Activated CD4-positive, alpha-beta T cell treated with anti-CD3 and anti-CD28 coated beads for 36 hours (primary cell): ENCODE measurements at regions of chr3 and their contacts with region 1.

Region 1: GRCh38 chr3:49856181-49857005 is at the start of gene TRAIP:
- DNase-seq: peak; percentile 97
- ATAC-seq: peak; percentile 99
- H3K4me3 Mint-ChIP-seq: peak within 1 kb of the TSS; percentile 97
- H3K27ac Mint-ChIP-seq: peak within 1 kb of the TSS; percentile 81
- H3K4me1 Mint-ChIP-seq: peaks cover 10% of the 10 kb centered on the region
- H3K27me3 Mint-ChIP-seq: no peaks in the 10 kb centered on the region
- total RNA-seq, gene TRAIP: 25.1 to 28.1 TPM

Region 2: GRCh38 chr3:49723628-49724551 is 132.5 kb before region 1 on chr3 and contains the start of gene GMPPB:
- CTCF ChIA-PET with region 1: no interaction called
- POLR2A ChIA-PET with region 1: no interaction called
- intact Hi-C with region 1: loop called in 1 of 2 experiments (anchors 1 kb)
- DNase-seq: peak; percentile 97
- ATAC-seq: peak; percentile 87
- H3K4me3 Mint-ChIP-seq: peak within 1 kb of the TSS; percentile 92
- H3K27ac Mint-ChIP-seq: peak within 1 kb of the TSS; percentile 96
- H3K4me1 Mint-ChIP-seq: peaks cover 22% of the 10 kb centered on the region
- H3K27me3 Mint-ChIP-seq: no peaks in the 10 kb centered on the region
- total RNA-seq, gene GMPPB: 21.0 to 32.1 TPM

Region 3: DNA sequence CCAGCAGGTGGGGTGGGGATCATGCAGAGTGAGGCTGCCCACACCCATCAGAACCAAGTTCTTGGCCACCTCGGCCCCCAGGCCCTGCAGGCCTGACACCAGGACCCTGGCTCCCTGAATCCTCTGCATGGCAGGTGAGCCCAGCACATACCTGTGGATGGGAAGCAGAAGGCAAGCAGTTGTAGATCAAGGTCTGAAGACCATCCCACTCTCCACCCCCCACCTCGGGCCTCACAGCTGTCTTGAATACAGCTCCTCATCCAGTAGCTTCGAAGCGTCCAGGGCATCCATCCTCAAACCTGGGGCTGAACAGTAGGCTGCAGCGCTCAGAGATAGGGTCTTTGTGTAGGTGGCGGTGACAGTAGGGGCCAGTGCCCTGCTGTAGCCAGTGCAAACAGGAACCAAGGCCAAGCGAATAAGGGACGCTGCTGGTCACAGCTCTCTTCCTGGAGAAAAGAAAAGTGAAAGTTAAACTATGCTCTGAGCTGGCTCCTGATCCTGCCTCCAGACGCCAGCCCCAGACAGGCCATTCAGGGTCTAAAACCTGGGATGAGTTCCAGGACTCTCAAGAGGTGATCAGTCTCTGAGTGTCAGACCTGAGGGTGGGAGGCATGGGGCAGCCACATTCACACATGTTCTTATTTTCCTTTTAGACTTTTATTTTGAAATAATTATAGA is 42.8 kb before region 1 on chr3 and contains the start of gene UBA7:
- CTCF ChIA-PET with region 1: no interaction called
- POLR2A ChIA-PET with region 1: no interaction called
- intact Hi-C with region 1: loop called in 1 of 2 experiments (anchors 1 kb)
- DNase-seq: peak; percentile 62
- ATAC-seq: peak; percentile 92
- H3K4me3 Mint-ChIP-seq: peak within 1 kb of the TSS; percentile 89
- H3K27ac Mint-ChIP-seq: peak within 1 kb of the TSS; percentile 95
- H3K4me1 Mint-ChIP-seq: peaks cover 14% of the 10 kb centered on the region
- H3K27me3 Mint-ChIP-seq: no peaks in the 10 kb centered on the region
- total RNA-seq, gene UBA7: 85.5 to 85.7 TPM

Region 4: GRCh38 chr3:49906004-49906743 is 49.8 kb after region 1 on chr3:
- CTCF ChIA-PET with region 1: no interaction called
- POLR2A ChIA-PET with region 1: no interaction called
- intact Hi-C with region 1: loop called (anchors 1 to 5 kb)
- DNase-seq: peak; percentile 77
- ATAC-seq: peak; percentile 45
- H3K4me3 Mint-ChIP-seq: peak overlapping the region; percentile 8
- H3K27ac Mint-ChIP-seq: peak overlapping the region; percentile 48
- H3K4me1 Mint-ChIP-seq: peaks cover 22% of the 10 kb centered on the region
- H3K27me3 Mint-ChIP-seq: no peaks in the 10 kb centered on the region

Region 5: DNA sequence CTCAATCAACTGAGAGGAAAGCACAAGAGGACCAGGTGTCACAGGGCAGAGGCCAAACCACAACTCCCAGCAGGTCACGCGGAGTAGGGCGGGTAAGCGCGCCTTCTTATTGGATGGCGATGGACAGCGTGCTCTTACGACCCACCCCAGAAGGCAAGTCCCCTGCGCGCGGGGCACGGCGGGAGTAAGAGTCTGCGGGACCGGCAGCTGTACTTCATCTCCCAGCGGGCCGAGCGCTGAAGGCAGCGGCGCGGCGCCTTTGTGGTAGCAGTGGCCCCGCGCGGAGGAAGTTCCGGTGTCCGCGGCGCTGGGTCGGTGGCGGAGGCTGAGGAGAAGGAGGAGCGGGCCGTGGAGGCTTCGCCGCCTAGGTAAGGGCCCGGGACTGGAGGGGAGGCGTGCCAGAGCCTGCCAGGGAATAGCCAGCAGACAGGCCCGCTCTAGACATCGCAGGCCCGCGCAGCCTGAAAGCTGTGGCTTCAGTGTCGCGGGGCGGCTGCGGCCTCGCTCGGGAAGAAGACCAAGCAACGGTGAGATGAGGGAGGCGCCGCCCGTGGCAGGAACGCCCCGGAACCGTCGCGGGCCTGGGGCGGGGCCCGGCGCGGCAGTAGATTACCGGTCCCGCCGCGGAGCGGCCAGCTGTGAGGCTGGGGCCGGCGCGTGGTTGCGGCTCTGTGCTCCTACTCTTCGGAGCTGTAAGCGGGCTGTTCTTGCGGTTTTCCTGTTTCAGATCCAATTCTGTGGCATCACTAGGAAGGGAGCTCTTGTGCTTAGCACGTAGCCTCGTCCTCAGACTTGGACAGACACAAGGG is 83.7 kb after region 1 on chr3 and contains the start of gene RBM6:
- CTCF ChIA-PET with region 1: no interaction called
- POLR2A ChIA-PET with region 1: interaction called, 3 read pairs
- intact Hi-C with region 1: loop called in 1 of 2 experiments (anchors 1 kb)
- DNase-seq: peak; percentile 98
- ATAC-seq: peak; percentile 99
- H3K4me3 Mint-ChIP-seq: peak within 1 kb of the TSS; percentile 98
- H3K27ac Mint-ChIP-seq: peak within 1 kb of the TSS; percentile 91
- H3K4me1 Mint-ChIP-seq: peaks cover 20% of the 10 kb centered on the region
- H3K27me3 Mint-ChIP-seq: no peaks in the 10 kb centered on the region
- total RNA-seq, gene RBM6: 69.3 to 75.1 TPM

Region 6: DNA sequence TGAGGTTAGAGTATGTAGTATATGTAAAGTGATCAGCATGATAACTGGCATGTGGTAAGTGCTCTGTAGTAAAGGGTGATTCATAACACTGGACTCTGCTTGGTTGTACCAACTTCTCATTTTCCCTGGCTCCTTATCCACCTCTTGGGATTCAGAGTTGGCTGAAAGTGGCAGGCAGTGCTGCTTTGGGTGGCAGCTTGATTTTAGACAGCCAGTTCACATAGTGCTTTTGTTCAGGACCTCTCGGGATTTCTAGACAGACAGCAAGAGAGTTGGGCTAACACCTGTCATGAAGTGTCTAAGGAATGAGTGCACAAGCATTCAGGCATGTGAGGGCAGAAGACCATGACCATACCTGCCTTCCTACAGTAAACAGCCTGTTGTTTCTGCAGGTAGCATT is 152.5 kb after region 1 on chr3:
- CTCF ChIA-PET with region 1: no interaction called
- POLR2A ChIA-PET with region 1: no interaction called
- intact Hi-C with region 1: no loop called
- DNase-seq: no peak
- ATAC-seq: no peak
- H3K4me3 Mint-ChIP-seq: no peak overlapping the region
- H3K27ac Mint-ChIP-seq: no peak overlapping the region
- H3K4me1 Mint-ChIP-seq: no peaks in the 10 kb centered on the region
- H3K27me3 Mint-ChIP-seq: no peaks in the 10 kb centered on the region

Region 7: DNA sequence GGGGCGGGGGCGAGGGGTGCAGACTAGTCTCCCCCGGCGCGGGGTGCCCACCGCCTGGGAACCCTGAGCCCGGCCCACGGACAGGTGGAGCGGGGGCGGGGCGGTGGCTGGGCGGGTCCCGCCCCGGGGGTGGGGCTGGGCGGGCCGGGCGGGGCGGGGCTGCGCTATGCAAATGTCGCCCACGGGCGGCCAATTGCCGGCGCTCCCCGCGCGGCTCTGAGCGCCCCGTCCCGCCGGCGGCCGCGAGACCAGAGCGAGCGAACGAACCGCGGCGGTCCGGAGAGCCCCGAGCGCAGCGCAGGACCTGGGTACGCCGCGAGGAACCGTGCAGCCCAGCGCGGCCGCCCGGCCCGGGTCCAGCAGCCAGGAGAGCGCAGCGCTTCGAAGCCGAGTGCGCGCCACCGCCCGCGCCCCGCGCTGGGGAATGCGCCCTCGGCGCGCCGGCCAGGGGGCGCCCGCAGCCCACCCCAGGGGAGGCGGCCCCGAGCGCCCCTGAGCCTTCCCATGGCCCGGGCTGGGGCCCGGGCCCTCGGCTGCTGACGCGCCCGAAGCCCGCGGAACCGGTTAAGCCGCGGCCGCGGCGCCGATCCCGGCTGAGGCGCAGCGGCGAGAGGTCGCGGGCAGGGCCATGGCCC is 298.6 kb after region 1 on chr3 and contains the start of gene SEMA3F:
- CTCF ChIA-PET with region 1: no interaction called
- POLR2A ChIA-PET with region 1: no interaction called
- intact Hi-C with region 1: loop called in 1 of 2 experiments (anchors 1 kb)
- DNase-seq: peak; percentile 79
- ATAC-seq: peak; percentile 89
- H3K4me3 Mint-ChIP-seq: peak within 1 kb of the TSS; percentile 60
- H3K27ac Mint-ChIP-seq: no peak within 1 kb of the TSS
- H3K4me1 Mint-ChIP-seq: peaks cover 8% of the 10 kb centered on the region
- H3K27me3 Mint-ChIP-seq: peaks cover 29% of the 10 kb centered on the region
- total RNA-seq, gene SEMA3F: 0.25 to 0.46 TPM